Activated T-helper 1 cell treated with anti-CD3 and anti-CD28 coated beads, Interleukin-12 subunit alpha, Interleukin-12 subunit beta, Interleukin-2, Interleukin-4 antibody, amounts not matched to agents 30 ng/mL and 10 ng/mL and 1 ng/mL, durations not matched to agents 14 hours and 24 hours and 36 hours (primary cell): ENCODE measurements at regions of chr17 and their contacts with region 1.

Region 1: DNA sequence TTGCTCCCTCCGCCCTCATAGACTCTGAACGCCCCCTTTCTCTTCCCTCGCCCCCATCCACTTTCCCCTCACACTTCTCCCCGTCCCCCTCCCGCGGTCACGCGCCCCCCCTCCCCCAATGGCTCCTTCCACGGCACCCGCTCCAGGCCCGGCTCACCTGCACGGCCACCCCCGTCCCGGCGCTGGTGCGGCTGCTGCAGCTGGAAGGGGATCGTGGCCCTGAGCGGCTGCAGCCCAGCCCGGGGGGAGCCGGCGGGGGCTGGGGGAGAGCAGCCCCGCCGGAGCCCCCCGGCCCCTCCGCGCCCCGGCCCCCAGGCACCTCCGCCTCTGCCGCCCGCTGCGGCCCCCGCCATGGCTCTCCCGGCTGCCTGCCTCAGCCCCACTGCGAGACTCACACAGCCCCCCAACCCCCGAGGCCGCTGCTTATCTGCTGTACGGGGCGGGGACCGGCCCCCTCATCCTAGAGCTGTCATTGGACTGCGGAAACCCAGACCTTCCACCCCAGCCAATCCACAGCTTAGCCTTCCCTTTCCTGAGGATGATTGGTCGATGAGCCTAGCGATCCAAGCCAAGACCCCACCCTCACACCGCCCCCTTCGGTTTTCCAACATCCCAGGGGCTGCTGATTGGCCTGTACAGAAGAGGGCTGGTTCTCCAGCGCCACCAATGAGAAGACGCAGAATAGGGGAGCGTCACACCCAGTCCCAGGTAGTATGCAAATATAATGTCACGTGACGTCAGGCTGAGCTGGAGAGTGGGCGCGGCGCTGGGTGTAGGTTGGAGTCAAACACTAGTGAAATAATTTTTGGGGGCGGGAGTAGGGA is at the start of gene FAM117A:
- DNase-seq: peak; percentile 95
- H3K4me3 Mint-ChIP-seq: peak within 1 kb of the TSS; percentile 96
- H3K27ac Mint-ChIP-seq: peak within 1 kb of the TSS; percentile 90
- H3K4me1 Mint-ChIP-seq: peaks cover 54% of the 10 kb centered on the region
- H3K27me3 Mint-ChIP-seq: peaks cover 25% of the 10 kb centered on the region
- total RNA-seq, gene FAM117A: 13.9 and 14.8 TPM in 2 replicates

Region 2: GRCh38 chr17:48113201-48113676 is 1650.7 kb before region 1 on chr17:
- intact Hi-C with region 1: loop called (anchors 5 kb)
- DNase-seq: peak; percentile 57
- H3K4me3 Mint-ChIP-seq: peak overlapping the region; percentile 15
- H3K27ac Mint-ChIP-seq: peak overlapping the region; percentile 46
- H3K4me1 Mint-ChIP-seq: peaks cover 43% of the 10 kb centered on the region
- H3K27me3 Mint-ChIP-seq: no peaks in the 10 kb centered on the region

Region 3: GRCh38 chr17:49677933-49678847 is 85.8 kb before region 1 on chr17 and contains the start of gene SPOP:
- intact Hi-C with region 1: loop called (anchors 1 kb)
- DNase-seq: peak; percentile 99
- H3K4me3 Mint-ChIP-seq: peak within 1 kb of the TSS; percentile 91
- H3K27ac Mint-ChIP-seq: peak within 1 kb of the TSS; percentile 99
- H3K4me1 Mint-ChIP-seq: peaks cover 41% of the 10 kb centered on the region
- H3K27me3 Mint-ChIP-seq: peaks cover 5% of the 10 kb centered on the region
- total RNA-seq, gene SPOP: 58.3 and 61.9 TPM in 2 replicates

Region 4: GRCh38 chr17:49715717-49716279 is 48.1 kb before region 1 on chr17:
- intact Hi-C with region 1: loop called (anchors 1 kb)
- DNase-seq: no peak
- H3K4me3 Mint-ChIP-seq: peak overlapping the region; percentile 55
- H3K27ac Mint-ChIP-seq: peak overlapping the region; percentile 93
- H3K4me1 Mint-ChIP-seq: peaks cover 26% of the 10 kb centered on the region
- H3K27me3 Mint-ChIP-seq: no peaks in the 10 kb centered on the region

Region 5: GRCh38 chr17:49739641-49740271 is 24.2 kb before region 1 on chr17:
- intact Hi-C with region 1: loop called (anchors 1 kb)
- DNase-seq: peak; percentile 83
- H3K4me3 Mint-ChIP-seq: peak overlapping the region; percentile 80
- H3K27ac Mint-ChIP-seq: peak overlapping the region; percentile 99
- H3K4me1 Mint-ChIP-seq: peaks cover 72% of the 10 kb centered on the region
- H3K27me3 Mint-ChIP-seq: no peaks in the 10 kb centered on the region

Region 6: DNA sequence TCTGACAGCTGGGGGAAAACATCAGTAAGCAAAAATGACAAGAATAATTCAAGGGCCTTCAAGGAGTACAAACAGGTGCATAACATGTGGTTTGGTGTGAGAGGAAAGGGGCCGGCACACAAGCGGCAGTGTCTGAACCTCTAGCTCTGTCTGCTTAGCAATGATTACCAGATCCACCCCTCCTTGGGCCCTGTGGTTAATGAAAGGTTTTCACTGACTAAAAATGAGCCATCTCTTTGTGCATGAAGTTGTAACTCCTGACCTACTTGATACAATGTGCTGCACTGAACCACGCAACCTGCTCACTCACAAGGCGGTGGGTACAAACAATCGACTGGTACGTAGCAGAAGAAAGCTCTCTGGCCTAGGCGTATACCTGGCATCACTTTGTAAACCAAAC is 15.2 kb before region 1 on chr17:
- intact Hi-C with region 1: loop called (anchors 1 kb)
- DNase-seq: peak; percentile 27
- H3K4me3 Mint-ChIP-seq: peak overlapping the region; percentile 78
- H3K27ac Mint-ChIP-seq: peak overlapping the region; percentile 93
- H3K4me1 Mint-ChIP-seq: peaks cover 72% of the 10 kb centered on the region
- H3K27me3 Mint-ChIP-seq: no peaks in the 10 kb centered on the region

Region 7: GRCh38 chr17:49775543-49776260 is 11.8 kb after region 1 on chr17:
- intact Hi-C with region 1: no loop called
- DNase-seq: no peak
- H3K4me3 Mint-ChIP-seq: no peak overlapping the region
- H3K27ac Mint-ChIP-seq: no peak overlapping the region
- H3K4me1 Mint-ChIP-seq: peaks cover 4% of the 10 kb centered on the region
- H3K27me3 Mint-ChIP-seq: peaks cover 3% of the 10 kb centered on the region

Region 8: GRCh38 chr17:50079334-50080095 is 315.6 kb after region 1 on chr17:
- intact Hi-C with region 1: no loop called
- DNase-seq: no peak
- H3K4me3 Mint-ChIP-seq: no peak overlapping the region
- H3K27ac Mint-ChIP-seq: no peak overlapping the region
- H3K4me1 Mint-ChIP-seq: no peaks in the 10 kb centered on the region
- H3K27me3 Mint-ChIP-seq: no peaks in the 10 kb centered on the region

Region 9: GRCh38 chr17:50200457-50201275 is 436.7 kb after region 1 on chr17:
- intact Hi-C with region 1: no loop called
- DNase-seq: peak; percentile 74
- H3K4me3 Mint-ChIP-seq: peak overlapping the region; percentile 77
- H3K27ac Mint-ChIP-seq: peak overlapping the region; percentile 79
- H3K4me1 Mint-ChIP-seq: peaks cover 17% of the 10 kb centered on the region
- H3K27me3 Mint-ChIP-seq: peaks cover 70% of the 10 kb centered on the region